Natural killer cell (primary cell): ENCODE measurements at regions of chrX and their contacts with region 1.

Region 1: GRCh38 chrX:132651421-132652086 is 162.7 kb upstream of the MBNL3 start:
- DNase-seq: peak in 1 of 2 donors; percentile 3
- ATAC-seq: peak in 2 of 3 donors; percentile 52 to 61
- H3K4me3 ChIP-seq: no peak overlapping the region
- H3K4me3 Mint-ChIP-seq: no peak overlapping the region
- H3K27ac ChIP-seq: no peak overlapping the region
- H3K27ac Mint-ChIP-seq: no peak overlapping the region
- H3K4me1 ChIP-seq: no peaks in the 10 kb centered on the region
- H3K4me1 Mint-ChIP-seq: no peaks in the 10 kb centered on the region
- H3K27me3 ChIP-seq: no peaks in the 10 kb centered on the region
- H3K27me3 Mint-ChIP-seq: peaks cover 0 to 11% of the 10 kb centered on the region in 2 donors
- CTCF ChIP-seq: no peak

Region 2: DNA sequence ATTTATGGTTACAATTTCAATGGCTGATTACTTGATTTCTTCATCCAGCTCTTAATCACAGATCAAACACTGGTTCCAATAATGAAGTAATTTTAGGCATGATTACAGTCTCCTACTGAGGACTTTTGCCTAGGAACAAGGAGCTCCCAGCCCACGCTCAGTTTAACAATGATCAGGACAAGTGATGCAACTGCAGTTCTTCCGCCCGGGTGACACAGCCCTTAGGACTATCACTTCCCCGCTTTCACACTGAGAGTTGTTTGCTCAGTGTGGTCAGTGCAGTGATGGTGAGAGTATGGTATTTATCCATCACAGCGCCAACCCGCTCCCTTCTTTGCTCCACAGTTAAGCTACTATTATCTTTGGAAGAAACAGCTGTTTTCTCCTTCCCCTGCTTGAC is 40.5 kb after region 1 on chrX:
- intact Hi-C with region 1: no loop called
- DNase-seq: no peak
- ATAC-seq: no peak
- H3K4me3 ChIP-seq: no peak overlapping the region
- H3K4me3 Mint-ChIP-seq: no peak overlapping the region
- H3K27ac ChIP-seq: no peak overlapping the region
- H3K27ac Mint-ChIP-seq: no peak overlapping the region
- H3K4me1 ChIP-seq: peaks cover 13% of the 10 kb centered on the region
- H3K4me1 Mint-ChIP-seq: peaks cover 22 to 23% of the 10 kb centered on the region in 2 donors
- H3K27me3 ChIP-seq: peaks cover 10% of the 10 kb centered on the region
- H3K27me3 Mint-ChIP-seq: peaks cover 27 to 88% of the 10 kb centered on the region in 2 donors
- CTCF ChIP-seq: no peak

Region 3: GRCh38 chrX:132716006-132716405 is 64.5 kb after region 1 on chrX:
- intact Hi-C with region 1: loop called (anchors 1 kb)
- DNase-seq: no peak
- ATAC-seq: no peak
- H3K4me3 ChIP-seq: no peak overlapping the region
- H3K4me3 Mint-ChIP-seq: no peak overlapping the region
- H3K27ac ChIP-seq: no peak overlapping the region
- H3K27ac Mint-ChIP-seq: no peak overlapping the region
- H3K4me1 ChIP-seq: no peaks in the 10 kb centered on the region
- H3K4me1 Mint-ChIP-seq: peaks cover under 1 to 2% of the 10 kb centered on the region in 2 donors
- H3K27me3 ChIP-seq: no peaks in the 10 kb centered on the region
- H3K27me3 Mint-ChIP-seq: peaks cover 3 to 50% of the 10 kb centered on the region in 2 donors
- CTCF ChIP-seq: no peak